ENCODE measurements at regions of chr17 and their contacts with region 1.

Region 1: DNA sequence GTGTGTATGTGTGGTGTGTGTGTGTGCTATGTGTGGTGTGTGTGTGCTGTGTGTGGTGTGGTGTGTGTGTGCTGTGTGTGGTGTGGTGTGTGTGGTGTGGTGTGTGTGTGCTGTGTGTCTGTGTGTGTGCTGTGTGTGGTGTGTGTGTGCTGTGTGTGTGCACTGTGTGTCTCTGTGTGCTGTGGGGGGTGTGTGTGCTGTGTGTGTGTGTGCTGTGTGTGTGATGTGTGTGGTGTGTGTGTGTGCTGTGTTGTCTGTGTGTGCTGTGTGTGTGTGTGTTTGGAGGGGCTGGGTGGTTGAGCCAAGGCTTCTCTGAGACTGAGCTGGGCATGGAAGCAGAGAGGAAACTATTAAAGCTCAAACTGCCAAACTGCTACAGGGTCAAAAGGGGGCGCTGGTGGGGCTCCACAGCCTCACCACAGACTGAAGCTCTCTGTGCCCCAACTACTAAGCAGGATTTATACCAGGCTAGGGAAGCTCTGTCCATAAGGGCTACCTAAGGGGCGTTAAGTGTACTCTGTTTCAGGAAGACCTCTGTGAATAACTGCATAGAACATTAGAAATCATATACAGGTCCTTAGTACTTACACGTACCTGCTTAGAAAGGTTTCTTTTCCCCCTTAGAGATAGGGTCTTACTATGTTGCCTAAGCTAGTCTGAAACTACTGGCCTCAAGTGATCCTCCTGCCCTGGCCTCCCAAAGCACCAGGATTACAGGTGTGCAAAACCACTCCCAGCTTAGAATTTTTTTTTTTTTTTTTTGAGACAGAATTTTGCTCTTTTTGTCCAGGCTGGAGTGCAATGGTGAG is 27.8 kb upstream of the GHDC start:
- DNase-seq: peak; percentile 69
- H3K4me3 Mint-ChIP-seq: no peak overlapping the region
- H3K27ac Mint-ChIP-seq: no peak overlapping the region
- H3K4me1 Mint-ChIP-seq: no peaks in the 10 kb centered on the region
- H3K27me3 Mint-ChIP-seq: no peaks in the 10 kb centered on the region

Region 2: GRCh38 chr17:42193969-42194899 is 27.9 kb before region 1 on chr17 and contains the start of gene GHDC:
- CTCF ChIA-PET with region 1: interaction called, 10 read pairs
- DNase-seq: peak; percentile 90
- H3K4me3 Mint-ChIP-seq: peak within 1 kb of the TSS; percentile 86
- H3K27ac Mint-ChIP-seq: peak within 1 kb of the TSS; percentile 80
- H3K4me1 Mint-ChIP-seq: peaks cover 25% of the 10 kb centered on the region
- H3K27me3 Mint-ChIP-seq: no peaks in the 10 kb centered on the region

Region 3: GRCh38 chr17:42270596-42270995 is 48.5 kb after region 1 on chr17:
- CTCF ChIA-PET with region 1: interaction called, 19 read pairs
- DNase-seq: no peak
- H3K4me3 Mint-ChIP-seq: peak overlapping the region; percentile 1
- H3K27ac Mint-ChIP-seq: peak overlapping the region; percentile 6
- H3K4me1 Mint-ChIP-seq: peaks cover 76% of the 10 kb centered on the region
- H3K27me3 Mint-ChIP-seq: no peaks in the 10 kb centered on the region

Region 4: GRCh38 chr17:42287926-42288802 is 66.0 kb after region 1 on chr17 and contains the start of gene STAT5A:
- CTCF ChIA-PET with region 1: interaction called, 29 read pairs
- DNase-seq: peak; percentile 90
- H3K4me3 Mint-ChIP-seq: peak within 1 kb of the TSS; percentile 97
- H3K27ac Mint-ChIP-seq: peak within 1 kb of the TSS; percentile 96
- H3K4me1 Mint-ChIP-seq: peaks cover 58% of the 10 kb centered on the region
- H3K27me3 Mint-ChIP-seq: no peaks in the 10 kb centered on the region

Region 5: GRCh38 chr17:42312285-42313130 is 90.4 kb after region 1 on chr17:
- CTCF ChIA-PET with region 1: interaction called, 61 read pairs
- DNase-seq: peak; percentile 85
- H3K4me3 Mint-ChIP-seq: peak overlapping the region; percentile 38
- H3K27ac Mint-ChIP-seq: peak overlapping the region; percentile 76
- H3K4me1 Mint-ChIP-seq: peaks cover 79% of the 10 kb centered on the region
- H3K27me3 Mint-ChIP-seq: no peaks in the 10 kb centered on the region

Region 6: GRCh38 chr17:42405963-42406495 is 183.9 kb after region 1 on chr17:
- CTCF ChIA-PET with region 1: interaction called, 24 read pairs
- DNase-seq: peak; percentile 87
- H3K4me3 Mint-ChIP-seq: no peak overlapping the region
- H3K27ac Mint-ChIP-seq: no peak overlapping the region
- H3K4me1 Mint-ChIP-seq: peaks cover 22% of the 10 kb centered on the region
- H3K27me3 Mint-ChIP-seq: peaks cover 43% of the 10 kb centered on the region

Region 7: GRCh38 chr17:42472709-42473521 is 250.8 kb after region 1 on chr17:
- CTCF ChIA-PET with region 1: no interaction called
- DNase-seq: no peak
- H3K4me3 Mint-ChIP-seq: no peak overlapping the region
- H3K27ac Mint-ChIP-seq: no peak overlapping the region
- H3K4me1 Mint-ChIP-seq: peaks cover 9% of the 10 kb centered on the region
- H3K27me3 Mint-ChIP-seq: no peaks in the 10 kb centered on the region